CD4-positive, alpha-beta T cell (primary cell): ENCODE measurements at regions of chr5 and their contacts with region 1.

Region 1: DNA sequence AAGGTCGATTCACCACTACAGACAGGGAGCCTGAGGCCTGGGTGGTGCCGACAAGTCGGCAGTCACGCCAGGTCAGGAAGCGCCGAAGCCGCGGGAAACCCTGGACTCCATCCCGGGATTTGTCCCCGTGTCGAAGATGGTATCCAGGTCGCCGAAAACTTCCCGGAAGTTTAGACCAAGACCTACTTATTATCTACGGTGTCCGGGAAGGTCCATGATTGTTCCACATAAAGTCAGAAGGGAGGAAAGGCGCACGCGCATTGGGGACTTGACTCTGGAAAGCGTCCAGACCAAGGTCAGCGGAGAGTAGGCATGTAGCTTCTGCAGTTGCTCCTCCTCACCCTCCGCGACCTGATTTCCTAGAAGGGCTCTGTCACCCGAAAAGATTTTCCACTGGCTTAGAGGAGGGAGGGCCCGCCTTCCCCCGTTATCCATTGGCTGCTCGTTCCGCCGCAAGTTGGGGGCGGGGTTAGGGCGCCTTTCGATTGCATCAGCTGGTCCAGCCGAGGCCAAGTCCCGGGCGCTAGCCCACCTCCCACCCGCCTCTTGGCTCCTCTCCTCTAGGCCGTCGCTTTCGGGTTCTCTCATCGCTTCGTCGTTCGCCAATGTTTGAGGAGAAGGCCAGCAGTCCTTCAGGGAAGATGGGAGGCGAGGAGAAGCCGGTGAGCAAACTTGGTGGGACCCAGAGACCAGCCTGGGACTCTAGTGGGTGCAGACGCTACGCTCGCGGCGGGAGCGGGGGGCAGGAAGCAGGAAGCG is at the start of gene TARS1:
- DNase-seq: peak; percentile 79 to 97 (median 88)
- ATAC-seq: peak; percentile 92
- H3K4me3 ChIP-seq: peak within 1 kb of the TSS; percentile 86
- H3K4me3 Mint-ChIP-seq: no peak within 1 kb of the TSS
- H3K27ac ChIP-seq: peak within 1 kb of the TSS; percentile 65 to 73
- H3K27ac Mint-ChIP-seq: no peak within 1 kb of the TSS
- H3K4me1 ChIP-seq: peaks cover 22% of the 10 kb centered on the region
- H3K4me1 Mint-ChIP-seq: peaks cover 25% of the 10 kb centered on the region
- H3K27me3 ChIP-seq: no peaks in the 10 kb centered on the region
- H3K27me3 Mint-ChIP-seq: no peaks in the 10 kb centered on the region
- CTCF ChIP-seq: no peak
- total RNA-seq, gene TARS1: 31.3 to 32.0 TPM

Region 2: DNA sequence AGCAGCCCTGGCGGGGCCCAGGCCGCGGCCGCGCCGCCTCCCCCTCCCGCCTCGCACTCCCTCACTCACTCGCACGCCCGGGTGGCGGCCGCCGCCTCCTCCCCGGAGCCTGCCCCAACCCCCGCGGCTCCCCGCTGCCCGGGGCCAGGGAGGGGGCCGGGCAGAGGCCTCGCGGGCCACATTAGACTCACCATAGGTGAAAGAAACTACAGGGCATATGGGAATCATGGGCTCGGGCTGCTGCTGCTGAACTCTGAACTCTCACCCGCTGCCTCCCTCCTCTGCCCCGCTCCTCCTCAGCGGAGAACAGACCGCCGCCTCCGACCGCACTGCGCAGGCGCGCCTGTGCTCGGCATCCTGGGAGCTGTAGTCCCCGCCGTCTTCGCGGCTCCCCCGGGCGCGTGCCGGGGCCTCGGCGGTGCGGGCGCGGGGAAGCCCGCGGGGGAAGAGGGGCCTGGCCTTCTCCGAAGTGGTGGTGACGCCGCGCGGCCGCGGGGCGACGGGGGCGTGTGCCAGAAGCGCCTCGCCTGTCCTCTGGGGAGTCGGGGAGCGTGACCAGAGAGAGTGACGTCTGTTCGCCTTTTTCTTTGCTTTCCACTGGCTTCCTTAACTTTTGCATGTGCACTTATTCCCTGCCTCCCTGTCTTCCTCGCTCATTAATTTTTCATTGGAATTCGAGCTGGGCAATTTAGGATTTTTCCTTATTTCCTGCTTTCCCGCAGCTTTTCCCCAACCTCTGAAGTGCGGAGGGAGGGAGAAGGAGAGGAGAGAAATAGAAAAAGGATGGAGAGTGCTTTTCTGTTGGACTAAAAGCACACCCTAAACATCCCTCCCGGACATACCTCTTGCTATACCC is 996.0 kb before region 1 on chr5 and contains the start of gene ZFR:
- CTCF ChIA-PET with region 1: no interaction called
- POLR2A ChIA-PET with region 1: no interaction called
- intact Hi-C with region 1: loop called in 1 of 2 experiments (anchors 5 kb)
- DNase-seq: peak; percentile 84 to 98 (median 92)
- ATAC-seq: peak; percentile 92
- H3K4me3 ChIP-seq: peak within 1 kb of the TSS; percentile 89
- H3K4me3 Mint-ChIP-seq: peak within 1 kb of the TSS; percentile 93
- H3K27ac ChIP-seq: peak within 1 kb of the TSS; percentile 88 to 91
- H3K27ac Mint-ChIP-seq: peak within 1 kb of the TSS; percentile 89
- H3K4me1 ChIP-seq: peaks cover 26% of the 10 kb centered on the region
- H3K4me1 Mint-ChIP-seq: peaks cover 32% of the 10 kb centered on the region
- H3K27me3 ChIP-seq: no peaks in the 10 kb centered on the region
- H3K27me3 Mint-ChIP-seq: no peaks in the 10 kb centered on the region
- CTCF ChIP-seq: no peak
- total RNA-seq, gene ZFR: 58.8 to 61.0 TPM

Region 3: GRCh38 chr5:33936004-33936380 is 495.3 kb after region 1 on chr5:
- CTCF ChIA-PET with region 1: interaction called, 13 read pairs
- POLR2A ChIA-PET with region 1: interaction called, 4 read pairs
- intact Hi-C with region 1: loop called in 1 of 2 experiments (anchors 1 kb)
- DNase-seq: peak in 8 of 14 experiments; percentile 1 to 51 (median 11)
- ATAC-seq: peak; percentile 61
- H3K4me3 ChIP-seq: no peak overlapping the region
- H3K4me3 Mint-ChIP-seq: no peak overlapping the region
- H3K27ac ChIP-seq: no peak overlapping the region
- H3K27ac Mint-ChIP-seq: no peak overlapping the region
- H3K4me1 ChIP-seq: peaks cover 7% of the 10 kb centered on the region
- H3K4me1 Mint-ChIP-seq: no peaks in the 10 kb centered on the region
- H3K27me3 ChIP-seq: peaks cover 37 to 56% of the 10 kb centered on the region in 2 experiments
- H3K27me3 Mint-ChIP-seq: peaks cover 69% of the 10 kb centered on the region
- CTCF ChIP-seq: no peak

Region 4: DNA sequence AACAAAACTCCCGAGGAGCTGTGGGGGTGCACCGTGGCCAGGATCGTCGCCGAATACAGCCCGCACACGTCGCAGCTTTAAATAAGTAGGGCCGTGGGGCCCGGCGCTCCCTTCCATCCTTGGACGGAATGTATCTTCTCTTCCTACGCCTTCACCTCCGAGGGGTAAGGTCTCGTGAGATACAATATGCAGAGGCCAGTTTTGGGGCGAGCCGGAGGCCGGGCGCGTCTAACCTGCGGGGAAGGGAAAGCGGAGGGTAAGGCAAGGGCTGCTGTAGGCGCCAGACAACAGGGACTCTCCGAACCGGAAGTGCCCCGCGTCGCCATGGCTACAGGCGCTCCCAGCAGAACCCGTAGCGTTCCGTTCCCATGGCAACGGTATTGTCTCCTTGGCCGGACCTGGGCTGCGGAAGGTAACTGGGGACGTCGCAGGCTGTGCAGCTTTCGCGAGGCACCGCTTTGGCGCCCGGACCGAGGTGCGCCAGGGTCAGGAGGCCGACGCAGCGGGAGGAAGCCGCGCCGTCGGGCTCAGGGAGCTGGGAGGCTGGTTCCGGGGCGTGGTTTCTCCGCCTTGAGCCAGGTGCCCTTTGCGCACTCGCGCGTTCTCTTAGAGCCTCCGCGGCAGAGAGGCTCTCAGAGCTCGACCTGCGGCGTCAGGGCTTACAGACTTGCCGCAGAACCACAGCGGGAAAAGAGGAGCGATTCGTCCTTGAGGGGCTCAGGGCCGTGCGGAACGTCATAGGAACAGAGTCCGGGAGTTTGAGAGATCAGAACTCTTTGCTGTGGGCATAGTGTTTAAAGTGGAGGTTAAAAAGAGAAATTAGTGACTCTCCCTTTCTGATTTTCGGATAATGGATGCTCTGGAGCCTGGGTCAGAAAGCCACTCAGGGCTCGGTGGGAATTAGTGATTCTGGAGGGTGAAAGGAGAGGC is 1398.4 kb after region 1 on chr5 and contains the start of gene TTC23L:
- CTCF ChIA-PET with region 1: no interaction called
- POLR2A ChIA-PET with region 1: no interaction called
- intact Hi-C with region 1: loop called in 1 of 2 experiments (anchors 5 kb)
- DNase-seq: peak; percentile 84 to 98 (median 87)
- ATAC-seq: peak; percentile 89
- H3K4me3 ChIP-seq: peak within 1 kb of the TSS; percentile 78
- H3K4me3 Mint-ChIP-seq: peak within 1 kb of the TSS; percentile 95
- H3K27ac ChIP-seq: peak within 1 kb of the TSS; percentile 63 to 76
- H3K27ac Mint-ChIP-seq: peak within 1 kb of the TSS; percentile 88
- H3K4me1 ChIP-seq: peaks cover 16% of the 10 kb centered on the region
- H3K4me1 Mint-ChIP-seq: peaks cover 17% of the 10 kb centered on the region
- H3K27me3 ChIP-seq: no peaks in the 10 kb centered on the region
- H3K27me3 Mint-ChIP-seq: peaks cover 8% of the 10 kb centered on the region
- CTCF ChIP-seq: no peak
- total RNA-seq, gene TTC23L: 0.20 TPM in 1 of 2 experiments, not detected in the other